Motor neuron (in vitro differentiated cells): ENCODE measurements at regions of chr3 and their contacts with region 1.

Region 1: GRCh38 chr3:101351829-101352228 is 31.5 kb upstream of the IMPG2 start:
- ATAC-seq: no peak
- H3K4me3 ChIP-seq: no peak overlapping the region
- H3K27ac ChIP-seq: no peak overlapping the region
- H3K4me1 ChIP-seq: no peaks in the 10 kb centered on the region

Region 2: DNA sequence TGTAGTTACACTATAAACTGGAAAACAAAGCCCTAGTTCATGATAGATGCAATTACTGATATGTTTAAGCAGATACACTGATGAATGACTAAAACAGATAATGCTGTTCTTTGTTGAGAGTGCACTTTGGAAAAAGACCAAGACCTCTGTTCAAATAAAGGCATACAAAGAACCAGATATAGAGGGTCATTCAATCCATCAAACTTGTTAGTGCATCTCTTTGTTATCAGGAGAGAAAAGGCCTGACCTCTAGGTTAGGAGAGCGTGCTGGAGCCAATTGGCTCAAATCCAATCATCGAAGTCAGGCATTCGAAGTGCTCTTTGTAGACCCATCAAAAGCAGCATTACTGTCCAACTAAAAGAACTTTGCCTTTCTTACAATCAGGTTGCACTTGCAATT is 518.3 kb before region 1 on chr3:
- in situ Hi-C with region 1: loop called in 1 of 9 experiments (anchors 25 kb)
- ATAC-seq: peak in 3 of 8 experiments; percentile 23 to 84 (median 27)
- H3K4me3 ChIP-seq: no peak overlapping the region
- H3K27ac ChIP-seq: no peak overlapping the region
- H3K4me1 ChIP-seq: no peaks in the 10 kb centered on the region

Region 3: GRCh38 chr3:101189796-101190195 is 162.0 kb before region 1 on chr3:
- in situ Hi-C with region 1: no loop called
- ATAC-seq: no peak
- H3K4me3 ChIP-seq: no peak overlapping the region
- H3K27ac ChIP-seq: no peak overlapping the region
- H3K4me1 ChIP-seq: peaks cover 0 to 12% of the 10 kb centered on the region in 2 donors